Dorsolateral prefrontal cortex (tissue), 120 donors: ENCODE measurements at regions of chr1 and their contacts with region 1.

Region 1: GRCh38 chr1:165543532-165544495 is at the start of gene LRRC52:
- DNase-seq: peak in 8 of 10 donors; percentile 27 to 63 (median 39)
- H3K4me3 ChIP-seq: peak within 1 kb of the TSS in 1 of 59 donors; percentile 6
- H3K27ac ChIP-seq: no peak within 1 kb of the TSS
- H3K27me3 ChIP-seq: peaks cover 0 to 24% (median 0%) of the 10 kb centered on the region in 45 donors
- CTCF ChIP-seq: peak in 5 of 56 donors; percentile 11 to 41 (median 13)
- total RNA-seq, gene LRRC52: 0.36 to 0.44 TPM in 2 of 120 experiments, not detected in the others

Region 2: GRCh38 chr1:165129568-165130164 is 414.1 kb before region 1 on chr1:
- intact Hi-C with region 1: no loop called
- DNase-seq: peak in 9 of 10 donors; percentile 34 to 77 (median 64)
- H3K4me3 ChIP-seq: no peak overlapping the region
- H3K27ac ChIP-seq: no peak overlapping the region
- H3K27me3 ChIP-seq: peaks cover 0 to 83% (median 11%) of the 10 kb centered on the region in 45 donors
- CTCF ChIP-seq: peak in 53 of 56 donors; percentile 12 to 69 (median 53)

Region 3: DNA sequence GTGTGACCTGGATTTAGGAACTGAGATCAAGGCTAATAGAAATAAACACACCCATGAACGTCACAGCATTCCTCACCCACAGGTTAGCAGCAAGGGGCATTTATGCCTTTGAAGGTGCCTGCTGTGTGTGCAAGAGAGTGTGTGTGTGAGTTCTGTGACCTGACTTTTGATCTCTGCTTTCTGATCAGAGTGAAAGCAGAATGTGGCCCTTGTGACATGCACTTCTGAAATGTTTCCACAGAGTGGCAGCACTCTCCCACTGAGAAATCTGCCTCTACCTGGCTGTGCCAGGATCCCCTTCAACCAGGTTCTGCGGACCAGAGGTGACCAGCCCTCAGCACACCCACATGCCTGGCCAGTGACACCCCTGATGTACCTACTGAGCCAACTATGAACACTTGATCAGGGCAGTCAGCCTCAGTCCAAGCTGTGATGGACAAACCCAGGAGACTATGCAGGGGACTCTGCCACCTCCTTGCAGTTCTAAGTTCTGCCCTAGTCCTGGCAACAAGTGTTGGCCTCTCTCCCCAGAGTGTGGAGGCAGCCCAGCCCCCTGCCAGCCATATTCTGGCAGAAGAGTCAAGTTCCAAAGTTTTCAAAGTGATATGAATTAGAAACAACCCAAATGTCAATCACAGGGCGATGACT is 139.9 kb before region 1 on chr1:
- intact Hi-C with region 1: loop called in 1 of 2 experiments (anchors 5 kb)
- DNase-seq: no peak
- H3K4me3 ChIP-seq: no peak overlapping the region
- H3K27ac ChIP-seq: no peak overlapping the region
- H3K27me3 ChIP-seq: peaks cover 0 to 6% (median 0%) of the 10 kb centered on the region in 45 donors
- CTCF ChIP-seq: peak in 54 of 56 donors; percentile 13 to 74 (median 56)